ENCODE measurements at regions of chr4 and their contacts with region 1.

Region 1: DNA sequence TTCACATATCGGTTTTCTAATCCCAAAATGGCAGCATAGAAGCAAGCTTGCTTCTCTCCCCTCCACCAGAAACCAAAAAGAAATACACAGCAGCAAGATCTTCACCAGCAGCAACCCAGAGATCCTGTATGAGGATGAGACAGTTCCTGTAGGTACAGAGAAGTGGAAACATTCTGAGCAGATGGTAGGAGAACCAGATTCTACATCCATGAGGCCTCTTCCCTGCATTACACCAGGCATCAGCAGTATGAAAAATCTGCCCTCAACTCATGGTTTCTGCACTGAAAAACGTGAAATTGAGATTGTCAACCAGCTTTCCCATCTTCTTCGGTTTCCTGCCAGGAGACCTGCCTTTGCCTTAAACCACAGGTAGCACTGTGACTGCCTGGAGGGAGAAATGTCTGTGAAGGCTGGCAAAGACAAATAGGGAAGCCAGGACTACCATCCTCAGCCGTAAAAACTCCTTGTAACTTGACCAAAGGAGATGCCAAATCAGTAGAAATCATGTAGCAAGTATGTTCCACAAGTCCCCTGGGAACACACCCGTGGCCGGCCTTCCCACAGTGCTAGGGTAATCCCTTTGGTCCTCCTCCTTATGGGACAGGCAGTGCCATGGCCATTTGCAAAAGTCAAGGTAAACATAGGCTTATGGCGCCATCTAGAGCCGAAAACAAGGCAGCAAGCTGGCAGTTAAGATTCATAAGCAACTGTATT is 24.0 kb upstream of the MTHFD2L start:
- DNase-seq: peak; percentile 90
- H3K4me3 ChIP-seq: no peak overlapping the region
- H3K27ac ChIP-seq: no peak overlapping the region
- H3K4me1 ChIP-seq: no peaks in the 10 kb centered on the region
- H3K27me3 ChIP-seq: no peaks in the 10 kb centered on the region
- CTCF ChIP-seq: peak; percentile 64 to 81
- POLR2A ChIP-seq: no peak

Region 2: GRCh38 chr4:73308286-73308685 is 825.7 kb before region 1 on chr4:
- CTCF ChIA-PET with region 1: interaction called, 8 read pairs
- POLR2A ChIA-PET with region 1: no interaction called
- dilution Hi-C with region 1: no loop called
- intact Hi-C with region 1: loop called (anchors 1 kb)
- DNase-seq: peak; percentile 20
- H3K4me3 ChIP-seq: no peak overlapping the region
- H3K27ac ChIP-seq: no peak overlapping the region
- H3K4me1 ChIP-seq: peaks cover 2% of the 10 kb centered on the region
- H3K27me3 ChIP-seq: peaks cover 0 to 2% of the 10 kb centered on the region in 2 experiments
- CTCF ChIP-seq: no peak
- POLR2A ChIP-seq: no peak

Region 3: GRCh38 chr4:73573794-73574406 is 560.0 kb before region 1 on chr4:
- CTCF ChIA-PET with region 1: interaction called, 94 read pairs
- POLR2A ChIA-PET with region 1: no interaction called
- dilution Hi-C with region 1: no loop called
- intact Hi-C with region 1: loop called (anchors 1 kb)
- DNase-seq: peak; percentile 73
- H3K4me3 ChIP-seq: no peak overlapping the region
- H3K27ac ChIP-seq: no peak overlapping the region
- H3K4me1 ChIP-seq: no peaks in the 10 kb centered on the region
- H3K27me3 ChIP-seq: no peaks in the 10 kb centered on the region
- CTCF ChIP-seq: peak; percentile 80 to 87
- POLR2A ChIP-seq: no peak

Region 4: GRCh38 chr4:73729534-73730165 is 404.3 kb before region 1 on chr4:
- CTCF ChIA-PET with region 1: interaction called, 22 read pairs
- POLR2A ChIA-PET with region 1: no interaction called
- dilution Hi-C with region 1: no loop called
- intact Hi-C with region 1: loop called (anchors 1 kb)
- DNase-seq: peak; percentile 85
- H3K4me3 ChIP-seq: no peak overlapping the region
- H3K27ac ChIP-seq: peak overlapping the region; percentile 10
- H3K4me1 ChIP-seq: peaks cover 69% of the 10 kb centered on the region
- H3K27me3 ChIP-seq: no peaks in the 10 kb centered on the region
- CTCF ChIP-seq: peak; percentile 79 to 87
- POLR2A ChIP-seq: no peak

Region 5: DNA sequence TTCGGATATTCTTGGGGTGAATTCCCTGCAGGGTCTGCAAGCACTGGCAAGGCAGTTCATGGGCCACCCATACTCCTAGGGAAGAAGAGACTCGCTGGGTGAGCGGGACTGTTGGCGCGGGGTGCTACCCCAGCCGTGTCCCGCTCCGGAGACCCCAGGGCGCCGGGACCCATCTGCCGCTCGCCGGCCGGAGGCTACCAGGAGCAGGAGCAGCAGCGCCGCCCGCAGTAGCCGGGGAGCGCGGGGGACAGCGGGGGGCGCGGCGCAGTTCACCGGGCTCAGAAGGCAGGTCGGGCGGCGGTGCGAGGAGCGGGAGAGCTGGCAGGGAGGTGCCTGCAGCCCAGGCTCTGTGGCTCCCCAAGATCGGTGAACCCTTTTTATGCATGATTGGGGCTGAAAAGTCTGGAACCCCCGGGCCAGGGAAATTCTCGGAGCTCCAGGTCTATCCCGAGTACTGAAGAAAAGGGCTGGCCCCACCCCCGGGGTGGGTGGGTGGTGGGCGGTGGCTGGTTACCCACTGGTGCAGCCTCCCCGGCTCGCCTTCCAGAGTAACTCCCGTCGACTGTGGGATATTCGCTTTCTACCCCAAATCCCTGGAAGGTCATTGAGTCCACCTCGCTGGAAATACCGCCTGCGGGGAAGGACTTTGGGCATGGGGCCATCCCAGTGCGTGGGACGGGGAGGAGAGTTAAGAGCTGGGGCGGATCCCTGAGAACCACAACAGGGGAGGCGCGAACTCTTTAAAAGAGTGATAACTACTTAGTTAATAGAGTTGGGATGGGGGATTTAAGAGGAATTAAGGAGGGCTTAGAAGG is 189.7 kb before region 1 on chr4:
- CTCF ChIA-PET with region 1: interaction called, 5 read pairs
- POLR2A ChIA-PET with region 1: no interaction called
- dilution Hi-C with region 1: no loop called
- intact Hi-C with region 1: loop called (anchors 1 kb)
- DNase-seq: peak; percentile 24
- H3K4me3 ChIP-seq: peak overlapping the region; percentile 53 to 62 (median 59)
- H3K27ac ChIP-seq: no peak overlapping the region
- H3K4me1 ChIP-seq: peaks cover 5% of the 10 kb centered on the region
- H3K27me3 ChIP-seq: peaks cover 0 to 3% of the 10 kb centered on the region in 2 experiments
- CTCF ChIP-seq: peak in 1 of 2 donors; percentile 12
- POLR2A ChIP-seq: no peak

Region 6: DNA sequence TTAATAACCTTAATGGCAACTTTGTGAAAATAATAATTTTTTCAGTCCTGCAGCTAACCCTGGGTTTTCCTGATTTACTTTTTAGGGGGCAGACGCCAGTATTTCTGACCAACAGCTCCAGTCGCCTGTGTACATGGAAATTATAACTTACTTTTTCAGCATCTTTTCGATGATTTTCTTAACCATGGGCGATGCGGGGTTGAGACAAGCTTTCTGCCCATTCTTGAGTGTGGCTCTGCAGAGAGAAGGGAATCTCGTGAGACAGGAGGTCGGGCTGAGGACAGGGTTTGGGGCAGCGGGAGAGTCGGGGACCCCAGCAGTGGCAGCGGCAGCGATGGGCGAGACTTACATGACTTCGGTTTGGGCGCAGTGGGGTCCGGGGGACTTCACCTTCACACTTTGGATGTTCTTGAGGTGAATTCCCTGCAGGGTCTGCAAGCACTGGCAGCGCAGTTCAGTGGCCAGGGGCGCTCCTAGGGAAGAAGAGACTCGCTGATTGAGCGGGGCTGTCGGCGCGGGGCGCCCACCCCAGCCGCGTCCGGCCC is 35.4 kb before region 1 on chr4:
- CTCF ChIA-PET with region 1: interaction called, 55 read pairs
- POLR2A ChIA-PET with region 1: interaction called, 3 read pairs
- dilution Hi-C with region 1: no loop called
- intact Hi-C with region 1: loop called (anchors 1 kb)
- DNase-seq: peak; percentile 38
- H3K4me3 ChIP-seq: peak overlapping the region; percentile 46 to 85 (median 69)
- H3K27ac ChIP-seq: peak overlapping the region; percentile 83
- H3K4me1 ChIP-seq: peaks cover 32% of the 10 kb centered on the region
- H3K27me3 ChIP-seq: no peaks in the 10 kb centered on the region
- CTCF ChIP-seq: no peak
- POLR2A ChIP-seq: no peak

Region 7: GRCh38 chr4:74146581-74147129 is 12.7 kb after region 1 on chr4:
- CTCF ChIA-PET with region 1: interaction called, 20 read pairs
- POLR2A ChIA-PET with region 1: no interaction called
- dilution Hi-C with region 1: no loop called
- intact Hi-C with region 1: no loop called
- DNase-seq: no peak
- H3K4me3 ChIP-seq: no peak overlapping the region
- H3K27ac ChIP-seq: no peak overlapping the region
- H3K4me1 ChIP-seq: no peaks in the 10 kb centered on the region
- H3K27me3 ChIP-seq: no peaks in the 10 kb centered on the region
- CTCF ChIP-seq: no peak
- POLR2A ChIP-seq: no peak